Activated CD4-positive, alpha-beta memory T cell treated with anti-CD3 and anti-CD28 coated beads for 36 hours (primary cell): ENCODE measurements at regions of chr22 and their contacts with region 1.

Region 1: GRCh38 chr22:45645526-45646414 is 25.9 kb upstream of the ATXN10 start:
- DNase-seq: peak; percentile 82
- H3K4me3 Mint-ChIP-seq: no peak overlapping the region
- H3K27ac Mint-ChIP-seq: no peak overlapping the region
- H3K4me1 Mint-ChIP-seq: peaks cover 3% of the 10 kb centered on the region
- H3K27me3 Mint-ChIP-seq: peaks cover 27% of the 10 kb centered on the region

Region 2: DNA sequence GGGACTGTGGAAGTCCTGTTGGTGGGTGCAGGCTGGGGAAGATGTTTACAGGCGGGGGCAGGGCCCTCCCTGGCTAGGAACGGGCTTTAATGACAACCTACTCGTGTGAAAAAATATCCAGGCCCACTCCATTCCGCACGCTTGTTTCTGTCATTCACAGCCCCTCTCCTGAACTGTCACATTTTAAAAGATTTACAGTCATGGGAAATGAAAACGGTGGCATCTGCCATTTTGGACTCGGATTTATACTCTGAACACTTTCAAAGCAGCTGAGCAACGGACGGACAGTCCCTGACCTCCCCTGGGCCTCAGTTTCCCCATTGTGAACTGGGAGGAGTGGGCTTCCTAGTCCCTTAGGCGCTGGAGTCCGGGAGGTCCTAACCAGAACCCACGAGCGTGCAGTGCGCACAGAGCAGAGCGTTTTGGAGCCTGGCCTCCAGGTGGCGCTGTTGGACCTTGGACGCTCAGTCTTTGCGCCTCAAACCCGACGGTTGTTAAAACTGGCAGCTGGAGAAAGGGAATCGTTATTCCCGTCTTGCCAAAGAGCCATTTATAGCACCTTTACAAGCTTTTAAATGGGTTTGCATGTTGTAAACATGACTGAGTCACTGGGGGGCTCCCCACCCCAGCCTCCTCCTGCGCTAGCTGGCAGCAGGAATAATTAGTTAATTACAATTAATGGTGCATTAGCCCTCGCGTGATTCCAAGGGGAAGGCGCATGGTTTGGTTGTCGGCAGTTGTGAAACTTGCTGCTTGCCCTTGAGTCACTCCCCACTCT is 67.8 kb before region 1 on chr22:
- CTCF ChIA-PET with region 1: interaction called, 5 read pairs
- POLR2A ChIA-PET with region 1: no interaction called
- intact Hi-C with region 1: loop called (anchors 10 kb)
- DNase-seq: peak; percentile 82
- H3K4me3 Mint-ChIP-seq: no peak overlapping the region
- H3K27ac Mint-ChIP-seq: no peak overlapping the region
- H3K4me1 Mint-ChIP-seq: no peaks in the 10 kb centered on the region
- H3K27me3 Mint-ChIP-seq: peaks cover 12% of the 10 kb centered on the region

Region 3: GRCh38 chr22:45632791-45633515 is 12.8 kb before region 1 on chr22:
- CTCF ChIA-PET with region 1: no interaction called
- POLR2A ChIA-PET with region 1: no interaction called
- intact Hi-C with region 1: no loop called
- DNase-seq: no peak
- H3K4me3 Mint-ChIP-seq: no peak overlapping the region
- H3K27ac Mint-ChIP-seq: no peak overlapping the region
- H3K4me1 Mint-ChIP-seq: no peaks in the 10 kb centered on the region
- H3K27me3 Mint-ChIP-seq: peaks cover 33% of the 10 kb centered on the region

Region 4: GRCh38 chr22:45656577-45656976 is 10.8 kb after region 1 on chr22:
- CTCF ChIA-PET with region 1: interaction called, 10 read pairs
- POLR2A ChIA-PET with region 1: no interaction called
- intact Hi-C with region 1: no loop called
- DNase-seq: no peak
- H3K4me3 Mint-ChIP-seq: no peak overlapping the region
- H3K27ac Mint-ChIP-seq: no peak overlapping the region
- H3K4me1 Mint-ChIP-seq: no peaks in the 10 kb centered on the region
- H3K27me3 Mint-ChIP-seq: peaks cover 6% of the 10 kb centered on the region